Transverse colon (tissue), 4 donors: ENCODE measurements at regions of chr7 and their contacts with region 1.

Region 1: GRCh38 chr7:14133752-14134151 is 144.3 kb upstream of the ETV1 start:
- DNase-seq: no peak
- H3K4me3 ChIP-seq: no peak overlapping the region
- H3K27ac ChIP-seq: no peak overlapping the region
- H3K4me1 ChIP-seq: no peaks in the 10 kb centered on the region
- H3K27me3 ChIP-seq: no peaks in the 10 kb centered on the region
- CTCF ChIP-seq: no peak
- EP300 ChIP-seq: no peak
- POLR2A ChIP-seq: no peak

Region 2: DNA sequence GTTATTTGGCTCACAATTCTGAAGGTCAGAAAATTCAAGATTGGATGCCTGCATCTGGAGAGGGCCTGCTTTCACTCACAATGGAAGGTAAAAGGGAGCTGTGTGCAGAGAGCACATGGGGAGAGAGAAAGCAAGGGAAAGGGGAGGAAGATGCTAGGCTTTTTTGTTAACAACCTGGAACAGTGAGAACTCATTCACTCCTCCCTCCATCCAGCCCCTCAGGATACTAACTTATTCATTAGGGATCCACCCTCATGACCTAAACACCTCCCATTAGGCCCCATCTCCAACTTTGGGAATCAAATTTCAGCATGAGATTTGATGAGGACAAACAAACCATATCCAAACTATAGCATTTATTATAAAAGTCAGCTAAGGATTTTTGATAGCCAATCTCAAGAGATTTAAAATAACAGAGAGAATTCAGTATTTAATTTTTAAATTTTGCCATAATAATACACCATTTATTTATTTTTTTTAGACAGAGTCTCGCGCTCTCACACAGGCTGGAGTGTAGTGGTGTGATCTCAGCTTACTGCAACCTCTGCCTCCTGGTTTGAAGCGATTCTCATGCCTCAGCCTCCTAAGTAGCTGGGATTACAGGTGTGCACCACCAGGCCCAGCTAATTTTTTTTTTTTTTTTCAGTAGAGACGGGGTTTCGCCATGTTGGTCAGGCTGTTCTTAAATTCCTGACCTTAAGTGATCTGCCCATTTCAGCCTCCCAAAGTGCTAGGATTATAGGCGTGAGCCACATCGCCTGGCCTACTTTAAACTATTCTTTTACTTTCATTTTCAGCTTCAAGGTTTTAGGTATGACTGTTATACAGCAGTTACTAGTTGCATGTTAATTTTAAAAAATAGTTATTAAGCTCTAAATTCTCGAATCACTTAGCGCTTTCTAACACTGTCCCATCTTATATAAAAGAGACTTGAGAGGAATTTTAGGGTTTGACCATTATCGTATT is 124.0 kb before region 1 on chr7:
- in situ Hi-C with region 1: no loop called
- intact Hi-C with region 1: no loop called
- DNase-seq: no peak
- H3K4me3 ChIP-seq: no peak overlapping the region
- H3K27ac ChIP-seq: no peak overlapping the region
- H3K4me1 ChIP-seq: no peaks in the 10 kb centered on the region
- H3K27me3 ChIP-seq: no peaks in the 10 kb centered on the region
- CTCF ChIP-seq: no peak
- EP300 ChIP-seq: no peak
- POLR2A ChIP-seq: no peak

Region 3: DNA sequence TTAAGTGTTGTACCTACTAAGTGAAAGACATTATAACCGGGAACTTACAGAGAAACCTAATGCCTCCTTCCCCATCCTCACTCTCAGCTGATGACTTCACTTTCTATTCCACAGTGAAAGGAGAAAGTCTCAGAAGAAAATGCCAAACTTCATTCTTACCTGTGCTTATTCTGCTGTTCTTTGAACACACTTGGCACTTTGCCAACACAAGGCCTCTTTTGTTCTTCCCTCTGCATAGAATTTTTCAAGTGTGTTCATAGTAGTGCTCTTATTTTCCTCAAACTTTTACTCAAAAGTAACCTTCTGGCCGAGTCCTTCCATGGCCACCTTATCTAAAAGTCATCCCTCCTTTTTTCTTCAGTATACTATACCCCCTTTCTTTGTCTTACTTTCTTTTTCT is 84.9 kb before region 1 on chr7:
- in situ Hi-C with region 1: no loop called
- intact Hi-C with region 1: no loop called
- DNase-seq: no peak
- H3K4me3 ChIP-seq: no peak overlapping the region
- H3K27ac ChIP-seq: no peak overlapping the region
- H3K4me1 ChIP-seq: no peaks in the 10 kb centered on the region
- H3K27me3 ChIP-seq: no peaks in the 10 kb centered on the region
- CTCF ChIP-seq: no peak
- EP300 ChIP-seq: no peak
- POLR2A ChIP-seq: no peak

Region 4: GRCh38 chr7:14115701-14116100 is 18.1 kb before region 1 on chr7:
- in situ Hi-C with region 1: no loop called
- intact Hi-C with region 1: loop called (anchors 1 kb)
- DNase-seq: no peak
- H3K4me3 ChIP-seq: no peak overlapping the region
- H3K27ac ChIP-seq: no peak overlapping the region
- H3K4me1 ChIP-seq: no peaks in the 10 kb centered on the region
- H3K27me3 ChIP-seq: no peaks in the 10 kb centered on the region
- CTCF ChIP-seq: no peak
- EP300 ChIP-seq: no peak
- POLR2A ChIP-seq: no peak

Region 5: DNA sequence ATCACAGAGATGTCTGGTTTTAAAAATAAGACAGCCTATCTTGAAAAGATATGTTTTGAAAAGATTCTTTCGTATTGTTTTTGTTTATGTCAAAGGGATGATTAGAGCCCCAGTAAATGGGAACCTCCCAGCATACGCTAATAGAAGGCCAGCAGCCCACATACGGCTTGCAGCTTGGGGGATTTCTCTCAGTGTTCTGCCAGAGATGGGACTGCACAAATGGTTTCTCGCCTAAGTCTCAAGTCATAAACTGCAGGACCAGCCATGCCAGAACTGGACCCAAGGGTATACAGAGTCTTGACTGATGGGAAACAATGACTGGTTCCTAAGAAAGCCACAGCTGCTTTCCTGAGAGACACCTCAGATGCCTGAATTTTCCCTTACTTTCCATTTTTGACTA is 1075.7 kb after region 1 on chr7:
- in situ Hi-C with region 1: no loop called
- intact Hi-C with region 1: no loop called
- DNase-seq: no peak
- H3K4me3 ChIP-seq: no peak overlapping the region
- H3K27ac ChIP-seq: no peak overlapping the region
- H3K4me1 ChIP-seq: no peaks in the 10 kb centered on the region
- H3K27me3 ChIP-seq: no peaks in the 10 kb centered on the region
- CTCF ChIP-seq: no peak
- EP300 ChIP-seq: no peak
- POLR2A ChIP-seq: no peak